Panc1 (cell line): ENCODE measurements at regions of chr11 and their contacts with region 1.

Region 1: DNA sequence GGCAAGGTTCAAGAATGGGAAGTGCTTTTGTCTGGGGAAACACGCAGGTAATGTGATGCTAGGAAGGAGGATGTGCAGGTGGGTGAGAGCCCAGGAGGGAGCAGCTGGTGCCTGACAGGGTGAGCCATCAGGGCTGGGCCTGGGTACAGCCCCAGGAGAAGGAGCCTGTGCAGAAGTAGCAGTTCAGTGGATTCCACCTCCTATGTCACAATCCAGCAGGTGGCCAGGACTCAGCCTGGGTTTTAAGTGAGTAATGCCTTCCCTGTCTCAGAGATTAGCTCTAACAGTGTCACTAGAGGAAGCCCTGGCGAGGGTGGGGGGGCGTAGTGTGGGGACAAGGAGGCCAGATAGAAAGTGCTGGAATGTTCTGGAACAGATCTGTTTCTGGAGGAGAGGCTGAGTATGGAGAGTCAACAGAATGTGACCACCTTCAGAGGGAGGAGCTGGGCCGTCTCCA is 8.1 kb downstream of the RIC8A start:
- DNase-seq: no peak
- ATAC-seq: peak; percentile 40
- H3K4me3 ChIP-seq: no peak overlapping the region
- H3K27ac ChIP-seq: no peak overlapping the region
- H3K4me1 ChIP-seq: peaks cover 7% of the 10 kb centered on the region
- H3K27me3 ChIP-seq: no peaks in the 10 kb centered on the region
- CTCF ChIP-seq: no peak

Region 2: GRCh38 chr11:199782-200181 is 15.8 kb before region 1 on chr11:
- CTCF ChIA-PET with region 1: no interaction called
- POLR2A ChIA-PET with region 1: no interaction called
- in situ Hi-C with region 1: no loop called
- intact Hi-C with region 1: no loop called
- DNase-seq: no peak
- ATAC-seq: peak; percentile 14
- H3K4me3 ChIP-seq: no peak overlapping the region
- H3K27ac ChIP-seq: no peak overlapping the region
- H3K4me1 ChIP-seq: no peaks in the 10 kb centered on the region
- H3K27me3 ChIP-seq: no peaks in the 10 kb centered on the region
- CTCF ChIP-seq: no peak

Region 3: DNA sequence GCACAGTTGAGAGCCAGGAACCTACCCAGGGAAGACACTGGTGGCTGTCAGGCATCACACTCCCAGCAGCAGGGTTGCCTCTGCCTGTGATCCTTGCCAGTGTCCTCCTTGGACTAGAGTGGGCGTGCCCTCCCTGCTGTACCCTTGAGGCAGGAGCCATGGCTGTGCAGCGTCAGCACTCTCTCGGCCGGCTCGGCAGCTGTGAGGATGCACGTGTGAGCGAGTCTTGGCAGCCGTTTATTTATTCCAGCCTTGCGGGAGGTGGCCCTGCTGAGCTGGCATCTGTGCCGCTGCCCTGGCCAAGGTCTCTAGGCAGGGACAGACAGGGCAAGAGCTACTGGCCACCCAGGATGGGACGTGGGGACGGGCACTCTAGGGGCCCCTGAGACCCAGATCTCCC is 660.9 kb after region 1 on chr11:
- CTCF ChIA-PET with region 1: no interaction called
- POLR2A ChIA-PET with region 1: interaction called, 13 read pairs
- in situ Hi-C with region 1: no loop called
- intact Hi-C with region 1: no loop called
- DNase-seq: no peak
- ATAC-seq: peak; percentile 15
- H3K4me3 ChIP-seq: no peak overlapping the region
- H3K27ac ChIP-seq: no peak overlapping the region
- H3K4me1 ChIP-seq: 0 out of 2 replicates have a peak, but pooled peaks cover 3% of the 10 kb centered on the region
- H3K27me3 ChIP-seq: no peaks in the 10 kb centered on the region
- CTCF ChIP-seq: no peak